ENCODE measurements at regions of chr3 and their contacts with region 1.

Region 1: DNA sequence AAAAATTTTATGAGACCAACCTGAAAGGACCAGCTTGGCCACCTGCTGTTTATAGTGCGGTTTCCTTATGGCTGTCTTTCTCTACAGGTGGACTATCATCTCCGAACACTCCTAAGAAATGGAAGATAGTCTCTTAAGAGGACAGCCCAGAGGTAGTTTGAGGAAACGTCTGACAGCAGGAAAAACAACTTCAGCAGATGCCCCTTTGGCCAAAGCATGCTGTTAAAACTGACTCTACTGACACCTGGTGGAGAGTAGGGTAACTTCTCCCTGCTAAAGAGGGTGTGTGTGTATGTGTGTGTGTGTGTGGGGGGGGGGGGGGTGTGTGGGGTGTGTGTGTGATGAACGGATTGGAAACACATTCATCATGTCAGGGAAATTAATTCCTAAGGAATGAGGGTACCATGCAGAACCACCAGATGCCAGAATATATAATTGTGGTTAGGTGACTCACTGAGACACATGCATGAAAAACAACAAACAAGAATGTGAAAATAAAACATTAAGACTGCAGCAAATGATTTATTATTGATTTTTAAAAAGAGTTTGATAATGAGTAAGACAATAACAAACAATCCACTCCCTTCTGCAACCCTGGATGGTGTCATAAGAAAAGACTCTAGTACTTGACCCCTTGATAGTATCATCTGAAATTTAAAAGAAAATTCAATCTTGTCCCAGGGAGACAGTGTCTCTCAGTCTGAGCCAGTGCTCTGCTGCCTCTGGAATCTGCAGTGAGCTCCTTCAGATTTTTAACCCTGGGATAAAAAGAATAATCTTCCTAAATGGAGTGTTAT is 256.5 kb downstream of the THRB start:
- DNase-seq: peak in 4 of 5 donors; percentile 53 to 86 (median 61)
- H3K4me3 ChIP-seq: no peak overlapping the region
- H3K27ac ChIP-seq: no peak overlapping the region
- H3K4me1 ChIP-seq: peaks cover 0 to 5% (median 4%) of the 10 kb centered on the region in 3 donors
- H3K27me3 ChIP-seq: no peaks in the 10 kb centered on the region
- CTCF ChIP-seq: peak; percentile 86

Region 2: DNA sequence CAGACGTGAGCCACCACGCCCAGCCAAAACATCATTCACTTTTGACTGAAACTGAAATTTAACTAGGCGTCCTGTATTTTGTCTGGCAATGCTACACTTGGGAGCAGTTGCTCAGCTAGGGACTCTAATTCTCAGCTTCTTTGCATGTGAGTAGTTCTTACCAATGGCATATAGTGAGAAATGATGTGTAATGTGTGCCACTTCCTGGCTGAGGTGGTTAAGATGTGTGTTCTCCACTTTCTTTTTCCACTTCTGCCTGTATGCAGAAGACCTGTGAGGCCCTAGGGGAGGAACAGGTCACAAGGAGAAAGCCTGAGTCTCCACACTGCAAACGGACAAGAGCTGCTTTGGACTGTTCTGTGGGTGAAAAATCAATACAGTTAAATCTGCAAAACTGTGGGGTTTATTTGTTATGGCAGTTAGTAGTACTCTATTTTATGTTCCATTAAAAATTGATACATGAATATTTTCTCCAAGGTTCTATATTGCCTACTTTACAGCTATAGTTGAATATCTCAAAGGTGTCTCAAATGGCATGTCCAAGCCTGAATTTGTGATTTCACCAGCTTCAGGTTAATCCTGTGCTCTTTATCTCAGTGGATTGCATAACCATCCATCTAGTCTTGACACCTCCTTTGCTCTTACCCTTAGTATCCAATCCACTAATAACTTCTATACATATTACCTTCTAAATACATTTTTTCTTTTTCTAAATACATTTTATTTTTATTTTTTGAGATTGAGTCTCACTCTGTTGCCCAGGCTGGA is 233.8 kb before region 1 on chr3:
- intact Hi-C with region 1: loop called (anchors 10 kb)
- DNase-seq: no peak
- H3K4me3 ChIP-seq: no peak overlapping the region
- H3K27ac ChIP-seq: no peak overlapping the region
- H3K4me1 ChIP-seq: no peaks in the 10 kb centered on the region
- H3K27me3 ChIP-seq: no peaks in the 10 kb centered on the region
- CTCF ChIP-seq: no peak

Region 3: DNA sequence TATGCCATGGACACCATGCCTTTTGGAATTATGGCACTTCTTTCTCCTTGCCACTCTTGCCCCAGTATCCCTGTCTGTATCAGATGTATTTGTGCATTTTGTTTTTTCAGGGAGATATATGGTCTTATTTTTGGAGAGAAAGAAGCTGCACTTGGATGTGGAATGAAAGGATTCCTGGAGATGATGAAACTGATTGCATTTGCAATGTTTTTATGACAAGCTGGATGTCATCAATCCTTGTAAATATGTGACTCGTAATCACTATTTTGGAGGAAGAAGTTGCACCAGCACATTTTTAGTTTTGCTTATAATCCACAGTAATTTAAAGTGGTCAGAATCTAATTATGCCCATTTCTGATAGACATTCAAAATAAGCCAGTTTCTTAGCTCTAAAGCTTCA is 128.1 kb before region 1 on chr3:
- intact Hi-C with region 1: no loop called
- DNase-seq: no peak
- H3K4me3 ChIP-seq: no peak overlapping the region
- H3K27ac ChIP-seq: no peak overlapping the region
- H3K4me1 ChIP-seq: no peaks in the 10 kb centered on the region
- H3K27me3 ChIP-seq: no peaks in the 10 kb centered on the region
- CTCF ChIP-seq: no peak

Region 4: GRCh38 chr3:24185738-24186384 is 52.3 kb before region 1 on chr3:
- intact Hi-C with region 1: loop called (anchors 5 kb)
- DNase-seq: peak in 4 of 5 donors; percentile 36 to 74 (median 46)
- H3K4me3 ChIP-seq: no peak overlapping the region
- H3K27ac ChIP-seq: no peak overlapping the region
- H3K4me1 ChIP-seq: no peaks in the 10 kb centered on the region
- H3K27me3 ChIP-seq: no peaks in the 10 kb centered on the region
- CTCF ChIP-seq: peak; percentile 59

Region 5: DNA sequence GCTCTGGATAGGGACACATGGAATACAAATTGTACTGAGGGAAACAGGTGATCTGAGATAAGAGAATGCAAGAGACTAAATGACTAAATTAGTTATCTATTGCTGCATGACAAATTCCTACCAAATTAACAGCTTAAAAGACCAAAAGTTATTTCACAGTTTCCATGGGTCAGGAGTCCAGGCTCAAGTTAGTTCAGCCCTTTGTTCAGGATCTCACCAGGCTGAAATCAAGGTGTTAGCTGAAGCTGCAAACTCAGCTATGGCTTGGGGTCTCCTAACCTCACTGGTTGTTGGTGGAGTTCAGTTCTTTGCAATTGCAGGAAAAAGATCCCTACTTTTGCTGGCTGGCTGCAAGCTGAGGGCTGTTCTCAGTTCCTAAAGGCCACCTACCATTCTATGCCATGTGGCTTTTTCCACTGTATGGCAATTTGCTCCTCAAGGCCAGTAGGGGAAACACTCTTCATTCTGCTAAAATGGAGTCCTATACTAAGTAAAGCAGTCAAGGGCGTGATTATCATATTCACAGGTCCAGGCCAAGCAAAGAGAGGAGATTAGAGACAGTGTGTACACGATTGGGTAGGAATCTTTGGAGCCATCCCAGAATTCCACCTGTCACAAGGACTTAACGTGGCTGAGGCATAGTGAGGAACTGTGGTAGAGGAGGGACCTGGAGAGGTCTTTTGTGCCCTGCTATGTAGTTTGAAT is 202.7 kb after region 1 on chr3:
- intact Hi-C with region 1: no loop called
- DNase-seq: no peak
- H3K4me3 ChIP-seq: peak overlapping the region in 1 of 3 donors; percentile 0
- H3K27ac ChIP-seq: no peak overlapping the region
- H3K4me1 ChIP-seq: peaks cover 0 to 11% (median 9%) of the 10 kb centered on the region in 3 donors
- H3K27me3 ChIP-seq: no peaks in the 10 kb centered on the region
- CTCF ChIP-seq: no peak